ENCODE measurements at regions of chr1 and their contacts with region 1.

Region 1: GRCh38 chr1:118404024-118404423 is 219.0 kb upstream of the SPAG17 start:
- DNase-seq: no peak
- ATAC-seq: no peak
- H3K4me3 ChIP-seq: no peak overlapping the region
- H3K4me3 Mint-ChIP-seq: no peak overlapping the region
- H3K27ac ChIP-seq: no peak overlapping the region
- H3K27ac Mint-ChIP-seq: no peak overlapping the region
- H3K4me1 ChIP-seq: no peaks in the 10 kb centered on the region
- H3K4me1 Mint-ChIP-seq: no peaks in the 10 kb centered on the region
- H3K27me3 ChIP-seq: no peaks in the 10 kb centered on the region
- H3K27me3 Mint-ChIP-seq: no peaks in the 10 kb centered on the region
- CTCF ChIP-seq: no peak

Region 2: DNA sequence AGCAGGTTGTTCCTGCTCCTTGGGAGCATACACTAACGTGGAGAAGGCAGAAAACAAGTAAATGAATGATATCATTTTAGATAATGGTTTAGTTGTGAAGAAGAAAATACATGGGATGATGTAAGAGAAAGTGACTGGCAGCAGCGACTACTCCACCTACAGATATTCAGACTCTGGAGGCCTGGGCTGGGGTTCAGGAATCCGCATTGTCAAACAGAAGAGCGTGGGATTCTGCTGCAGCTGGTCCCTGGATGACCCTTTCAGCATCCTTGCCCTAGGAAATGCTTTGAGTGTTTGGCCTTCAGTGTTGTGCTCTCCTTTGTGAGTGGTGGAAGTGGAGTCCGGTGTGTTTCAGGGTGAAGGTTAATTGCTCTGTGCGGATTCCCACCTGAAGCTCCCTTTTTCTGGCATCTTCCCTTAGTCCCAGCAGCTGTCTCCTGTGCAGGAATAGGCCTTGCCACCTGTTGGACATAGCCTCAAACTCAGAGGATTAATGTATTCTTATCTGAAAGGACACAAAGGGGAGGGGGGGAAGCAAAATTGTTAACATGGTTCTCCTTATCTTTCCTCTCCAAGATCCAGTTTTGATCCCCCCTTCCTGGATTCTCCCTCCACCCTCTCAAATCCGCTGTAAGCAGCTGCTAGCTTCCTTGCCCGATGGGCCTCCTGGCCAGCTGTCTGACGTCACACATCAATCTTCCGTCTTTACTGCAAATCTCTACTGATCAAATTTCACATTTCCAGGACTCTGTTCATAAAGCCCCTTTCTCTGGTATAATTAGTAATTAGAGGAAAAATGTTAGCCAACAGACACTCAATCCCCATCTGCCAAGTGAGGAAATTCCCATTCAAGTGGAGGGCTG is 150.7 kb before region 1 on chr1:
- intact Hi-C with region 1: no loop called
- DNase-seq: no peak
- ATAC-seq: no peak
- H3K4me3 ChIP-seq: no peak overlapping the region
- H3K4me3 Mint-ChIP-seq: no peak overlapping the region
- H3K27ac ChIP-seq: no peak overlapping the region
- H3K27ac Mint-ChIP-seq: no peak overlapping the region
- H3K4me1 ChIP-seq: no peaks in the 10 kb centered on the region
- H3K4me1 Mint-ChIP-seq: no peaks in the 10 kb centered on the region
- H3K27me3 ChIP-seq: no peaks in the 10 kb centered on the region
- H3K27me3 Mint-ChIP-seq: no peaks in the 10 kb centered on the region
- CTCF ChIP-seq: no peak

Region 3: DNA sequence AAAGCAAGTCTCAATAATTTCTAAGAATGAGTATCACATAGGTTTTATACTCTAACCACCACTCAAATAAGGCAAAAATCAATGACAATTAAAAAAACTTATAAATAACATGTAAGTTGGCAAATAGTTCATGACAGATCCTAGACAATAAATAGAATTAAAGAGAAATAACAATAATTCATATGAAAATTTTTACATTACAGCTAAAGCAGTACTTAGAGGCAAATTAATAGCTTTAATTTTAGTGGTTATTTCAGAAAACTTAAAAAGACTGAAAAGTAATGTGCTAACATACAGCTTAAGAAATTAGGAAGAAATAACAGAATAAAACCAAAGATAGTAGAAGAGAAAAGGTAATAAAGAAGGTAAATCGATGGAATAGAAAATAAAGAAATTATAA is 39.1 kb before region 1 on chr1:
- intact Hi-C with region 1: loop called (anchors 1 kb)
- DNase-seq: no peak
- ATAC-seq: no peak
- H3K4me3 ChIP-seq: no peak overlapping the region
- H3K4me3 Mint-ChIP-seq: no peak overlapping the region
- H3K27ac ChIP-seq: no peak overlapping the region
- H3K27ac Mint-ChIP-seq: no peak overlapping the region
- H3K4me1 ChIP-seq: no peaks in the 10 kb centered on the region
- H3K4me1 Mint-ChIP-seq: no peaks in the 10 kb centered on the region
- H3K27me3 ChIP-seq: no peaks in the 10 kb centered on the region
- H3K27me3 Mint-ChIP-seq: no peaks in the 10 kb centered on the region
- CTCF ChIP-seq: no peak

Region 4: DNA sequence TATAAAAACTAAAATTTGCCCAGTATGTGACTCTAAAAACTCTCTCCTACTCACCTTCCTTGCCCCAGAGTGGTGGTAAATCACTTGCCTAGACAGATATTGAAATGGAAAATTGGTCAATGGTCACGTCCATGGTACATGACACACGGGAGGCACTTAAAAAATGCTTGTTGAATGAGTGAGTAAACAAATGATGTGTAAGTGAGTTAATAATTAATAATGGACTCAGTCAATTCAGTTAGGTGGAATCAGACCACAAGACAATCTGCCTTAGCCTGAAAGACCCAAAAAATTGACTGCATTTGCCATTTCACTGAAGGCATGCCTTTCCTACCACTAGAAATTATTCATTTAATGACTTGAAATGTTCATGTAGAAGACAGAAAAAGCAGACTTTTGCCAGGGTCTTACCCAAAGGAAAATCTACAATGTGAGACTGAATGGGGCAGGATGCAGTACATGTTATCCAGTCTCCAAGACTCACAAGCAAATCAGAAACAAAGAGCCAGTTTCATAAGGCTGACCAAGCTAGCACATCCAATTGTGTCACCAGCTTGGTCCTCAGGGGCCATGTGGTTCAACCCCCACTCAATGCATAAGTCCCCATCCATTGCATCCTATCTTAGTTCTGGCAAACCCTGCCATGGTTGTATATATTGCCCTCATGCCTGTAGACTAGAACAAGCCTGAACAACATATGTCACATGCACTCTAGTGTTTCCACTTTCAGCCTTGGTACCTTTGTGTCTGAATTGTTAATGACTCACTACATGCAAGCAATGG is 510.5 kb after region 1 on chr1:
- intact Hi-C with region 1: no loop called
- DNase-seq: no peak
- ATAC-seq: no peak
- H3K4me3 ChIP-seq: no peak overlapping the region
- H3K4me3 Mint-ChIP-seq: no peak overlapping the region
- H3K27ac ChIP-seq: no peak overlapping the region
- H3K27ac Mint-ChIP-seq: no peak overlapping the region
- H3K4me1 ChIP-seq: no peaks in the 10 kb centered on the region
- H3K4me1 Mint-ChIP-seq: no peaks in the 10 kb centered on the region
- H3K27me3 ChIP-seq: no peaks in the 10 kb centered on the region
- H3K27me3 Mint-ChIP-seq: no peaks in the 10 kb centered on the region
- CTCF ChIP-seq: no peak